CD4-positive, alpha-beta T cell (primary cell): ENCODE measurements at regions of chr18 and their contacts with region 1.

Region 1: GRCh38 chr18:34639687-34640086 is 70.4 kb upstream of the DTNA start:
- DNase-seq: no peak
- ATAC-seq: no peak
- H3K4me3 ChIP-seq: no peak overlapping the region
- H3K4me3 Mint-ChIP-seq: no peak overlapping the region
- H3K27ac ChIP-seq: no peak overlapping the region
- H3K27ac Mint-ChIP-seq: no peak overlapping the region
- H3K4me1 ChIP-seq: no peaks in the 10 kb centered on the region
- H3K4me1 Mint-ChIP-seq: no peaks in the 10 kb centered on the region
- H3K27me3 ChIP-seq: no peaks in the 10 kb centered on the region
- H3K27me3 Mint-ChIP-seq: no peaks in the 10 kb centered on the region
- CTCF ChIP-seq: no peak

Region 2: DNA sequence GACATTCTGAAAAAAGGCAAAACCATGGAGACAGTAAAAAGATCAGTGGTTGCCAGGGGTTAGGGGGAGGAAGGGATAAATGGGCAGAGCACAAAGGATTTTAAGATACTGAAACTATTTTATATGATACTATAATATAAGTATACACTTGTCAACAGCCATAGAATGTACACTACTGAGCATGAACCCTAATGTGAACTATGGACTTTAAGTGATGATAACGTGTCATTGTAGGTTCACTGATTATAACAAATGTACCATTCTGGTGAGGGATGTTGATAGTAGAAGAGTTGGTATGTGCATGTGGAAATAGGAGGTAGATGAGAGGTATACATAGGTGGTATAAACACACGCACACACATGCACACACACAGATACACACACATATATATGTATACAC is 656.6 kb before region 1 on chr18:
- CTCF ChIA-PET with region 1: no interaction called
- POLR2A ChIA-PET with region 1: no interaction called
- intact Hi-C with region 1: no loop called
- DNase-seq: no peak
- ATAC-seq: no peak
- H3K4me3 ChIP-seq: no peak overlapping the region
- H3K4me3 Mint-ChIP-seq: no peak overlapping the region
- H3K27ac ChIP-seq: no peak overlapping the region
- H3K27ac Mint-ChIP-seq: no peak overlapping the region
- H3K4me1 ChIP-seq: no peaks in the 10 kb centered on the region
- H3K4me1 Mint-ChIP-seq: no peaks in the 10 kb centered on the region
- H3K27me3 ChIP-seq: no peaks in the 10 kb centered on the region
- H3K27me3 Mint-ChIP-seq: no peaks in the 10 kb centered on the region
- CTCF ChIP-seq: no peak

Region 3: GRCh38 chr18:34122724-34123334 is 516.9 kb before region 1 on chr18:
- CTCF ChIA-PET with region 1: no interaction called
- POLR2A ChIA-PET with region 1: no interaction called
- intact Hi-C with region 1: no loop called
- DNase-seq: peak in 1 of 14 experiments; percentile 7
- ATAC-seq: no peak
- H3K4me3 ChIP-seq: no peak overlapping the region
- H3K4me3 Mint-ChIP-seq: no peak overlapping the region
- H3K27ac ChIP-seq: no peak overlapping the region
- H3K27ac Mint-ChIP-seq: no peak overlapping the region
- H3K4me1 ChIP-seq: no peaks in the 10 kb centered on the region
- H3K4me1 Mint-ChIP-seq: no peaks in the 10 kb centered on the region
- H3K27me3 ChIP-seq: no peaks in the 10 kb centered on the region
- H3K27me3 Mint-ChIP-seq: no peaks in the 10 kb centered on the region
- CTCF ChIP-seq: peak; percentile 22

Region 4: GRCh38 chr18:34583895-34584294 is 55.8 kb before region 1 on chr18:
- CTCF ChIA-PET with region 1: no interaction called
- POLR2A ChIA-PET with region 1: no interaction called
- intact Hi-C with region 1: loop called in 1 of 2 experiments (anchors 10 kb)
- DNase-seq: no peak
- ATAC-seq: no peak
- H3K4me3 ChIP-seq: no peak overlapping the region
- H3K4me3 Mint-ChIP-seq: no peak overlapping the region
- H3K27ac ChIP-seq: no peak overlapping the region
- H3K27ac Mint-ChIP-seq: no peak overlapping the region
- H3K4me1 ChIP-seq: no peaks in the 10 kb centered on the region
- H3K4me1 Mint-ChIP-seq: no peaks in the 10 kb centered on the region
- H3K27me3 ChIP-seq: no peaks in the 10 kb centered on the region
- H3K27me3 Mint-ChIP-seq: no peaks in the 10 kb centered on the region
- CTCF ChIP-seq: no peak